Endothelial cell of umbilical vein (primary cell): ENCODE measurements at regions of chr4 and their contacts with region 1.

Region 1: DNA sequence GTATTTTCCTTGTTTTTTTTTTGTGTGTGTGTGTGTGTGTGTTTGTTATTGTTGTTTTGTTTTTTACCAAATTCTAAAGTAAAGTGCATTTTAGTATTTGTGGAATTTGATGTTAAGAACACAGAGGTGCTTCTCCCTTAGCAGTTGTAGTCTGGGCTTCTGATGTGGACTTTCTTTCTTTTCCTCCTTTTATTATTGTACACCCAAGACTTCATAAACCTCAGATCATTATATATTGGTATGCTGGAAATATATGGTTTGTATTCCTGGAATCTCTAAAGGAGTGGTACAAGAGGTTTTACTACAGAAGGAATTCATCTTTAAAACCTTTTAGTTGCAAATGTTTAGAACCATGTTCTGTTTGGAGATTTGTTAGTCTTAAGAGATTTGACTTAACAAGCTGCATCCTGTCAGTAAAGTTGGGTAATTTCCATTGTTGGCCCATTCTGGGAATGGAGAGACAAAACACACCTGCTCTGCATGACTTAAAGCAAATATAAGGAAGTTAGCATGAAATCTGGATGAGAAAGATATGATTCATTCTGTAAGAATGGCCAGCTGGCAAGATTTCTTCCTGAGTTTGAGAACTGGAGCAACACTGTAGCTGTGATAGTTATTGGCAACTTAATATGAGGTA is 64.0 kb downstream of the SMAD1 start:
- DNase-seq: peak; percentile 100
- H3K4me3 ChIP-seq: peak overlapping the region in 1 of 3 experiments; percentile 58
- H3K27ac ChIP-seq: peak overlapping the region; percentile 98
- H3K4me1 ChIP-seq: peaks cover 43% of the 10 kb centered on the region
- H3K27me3 ChIP-seq: no peaks in the 10 kb centered on the region
- CTCF ChIP-seq: no peak
- POLR2A ChIP-seq: peak; percentile 73

Region 2: DNA sequence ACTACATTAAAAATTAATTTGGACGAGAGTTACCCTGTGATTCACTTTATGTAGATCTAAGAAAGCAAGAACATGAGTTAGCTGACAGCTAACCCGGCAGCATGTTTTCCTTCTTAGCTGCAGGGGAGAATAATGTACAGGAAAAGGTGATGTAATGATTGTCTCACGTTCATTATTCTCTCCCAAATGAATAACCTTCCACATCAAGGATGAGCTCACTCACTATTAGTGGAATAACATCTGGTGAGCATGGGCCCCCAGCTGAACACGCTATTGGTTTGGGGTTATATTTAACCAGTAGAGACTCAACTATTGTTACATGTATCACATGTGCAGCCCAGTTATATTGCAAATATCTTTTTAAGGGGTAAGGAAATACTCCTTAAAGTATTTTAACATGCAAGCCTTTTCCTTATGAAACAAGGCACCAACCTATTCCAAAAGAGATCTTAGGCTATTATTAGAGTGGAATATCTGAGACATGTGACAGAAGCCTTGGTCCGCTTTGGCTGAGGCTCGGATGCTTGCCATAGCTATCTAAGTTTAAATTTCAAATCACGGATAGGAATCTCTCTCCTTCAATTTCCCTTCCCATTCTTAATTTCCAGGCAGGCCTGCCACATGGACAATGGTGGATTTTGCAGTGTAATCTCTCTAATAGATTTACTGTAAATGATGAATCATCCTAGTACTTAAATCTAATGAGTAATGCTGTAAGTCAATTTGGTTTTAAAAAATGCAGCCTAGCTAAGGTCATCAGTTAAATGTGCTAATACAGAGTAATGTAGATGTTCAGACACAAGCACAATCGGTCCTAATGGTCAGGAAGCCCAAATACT is 266.3 kb before region 1 on chr4:
- CTCF ChIA-PET with region 1: interaction called, 3 read pairs
- POLR2A ChIA-PET with region 1: no interaction called
- dilution Hi-C with region 1: no loop called
- intact Hi-C with region 1: loop called (anchors 1 kb)
- DNase-seq: peak; percentile 84
- H3K4me3 ChIP-seq: no peak overlapping the region
- H3K27ac ChIP-seq: peak overlapping the region; percentile 97
- H3K4me1 ChIP-seq: peaks cover 38% of the 10 kb centered on the region
- H3K27me3 ChIP-seq: no peaks in the 10 kb centered on the region
- CTCF ChIP-seq: no peak
- POLR2A ChIP-seq: no peak

Region 3: GRCh38 chr4:145418739-145419138 is 126.9 kb before region 1 on chr4:
- CTCF ChIA-PET with region 1: no interaction called
- POLR2A ChIA-PET with region 1: no interaction called
- dilution Hi-C with region 1: no loop called
- intact Hi-C with region 1: no loop called
- DNase-seq: no peak
- H3K4me3 ChIP-seq: no peak overlapping the region
- H3K27ac ChIP-seq: no peak overlapping the region
- H3K4me1 ChIP-seq: no peaks in the 10 kb centered on the region
- H3K27me3 ChIP-seq: peaks cover 0 to 4% of the 10 kb centered on the region in 2 experiments
- CTCF ChIP-seq: no peak
- POLR2A ChIP-seq: no peak

Region 4: GRCh38 chr4:145487631-145488030 is 58.0 kb before region 1 on chr4:
- CTCF ChIA-PET with region 1: interaction called, 8 read pairs
- POLR2A ChIA-PET with region 1: interaction called, 5 read pairs
- dilution Hi-C with region 1: no loop called
- intact Hi-C with region 1: loop called (anchors 1 kb)
- DNase-seq: no peak
- H3K4me3 ChIP-seq: no peak overlapping the region
- H3K27ac ChIP-seq: no peak overlapping the region
- H3K4me1 ChIP-seq: peaks cover 32% of the 10 kb centered on the region
- H3K27me3 ChIP-seq: no peaks in the 10 kb centered on the region
- CTCF ChIP-seq: no peak
- POLR2A ChIP-seq: no peak

Region 5: GRCh38 chr4:145525291-145525740 is 20.3 kb before region 1 on chr4:
- CTCF ChIA-PET with region 1: interaction called, 4 read pairs
- POLR2A ChIA-PET with region 1: no interaction called
- dilution Hi-C with region 1: no loop called
- intact Hi-C with region 1: loop called (anchors 2 kb)
- DNase-seq: no peak
- H3K4me3 ChIP-seq: no peak overlapping the region
- H3K27ac ChIP-seq: no peak overlapping the region
- H3K4me1 ChIP-seq: peaks cover 8% of the 10 kb centered on the region
- H3K27me3 ChIP-seq: no peaks in the 10 kb centered on the region
- CTCF ChIP-seq: no peak
- POLR2A ChIP-seq: no peak

Region 6: GRCh38 chr4:145851511-145852201 is 306.0 kb after region 1 on chr4:
- CTCF ChIA-PET with region 1: no interaction called
- POLR2A ChIA-PET with region 1: no interaction called
- dilution Hi-C with region 1: no loop called
- intact Hi-C with region 1: no loop called
- DNase-seq: no peak
- H3K4me3 ChIP-seq: no peak overlapping the region
- H3K27ac ChIP-seq: no peak overlapping the region
- H3K4me1 ChIP-seq: peaks cover 7% of the 10 kb centered on the region
- H3K27me3 ChIP-seq: no peaks in the 10 kb centered on the region
- CTCF ChIP-seq: no peak
- POLR2A ChIP-seq: no peak